ENCODE measurements at regions of chr19 and their contacts with region 1.

Region 1: GRCh38 chr19:2475702-2476450 is at the start of gene GADD45B:
- DNase-seq: peak; percentile 98 to 99 (median 99)
- H3K4me3 ChIP-seq: peak within 1 kb of the TSS; percentile 59 to 91 (median 73)
- H3K27ac ChIP-seq: peak within 1 kb of the TSS; percentile 79 to 96 (median 82)
- H3K4me1 ChIP-seq: peaks cover 10 to 17% of the 10 kb centered on the region in 2 donors
- H3K27me3 ChIP-seq: no peaks in the 10 kb centered on the region
- CTCF ChIP-seq: peak in 1 of 6 experiments; percentile 12
- POLR2A ChIP-seq: peak; percentile 100
- total RNA-seq, gene GADD45B: 14.1 to 119 (median 63.6) TPM

Region 2: DNA sequence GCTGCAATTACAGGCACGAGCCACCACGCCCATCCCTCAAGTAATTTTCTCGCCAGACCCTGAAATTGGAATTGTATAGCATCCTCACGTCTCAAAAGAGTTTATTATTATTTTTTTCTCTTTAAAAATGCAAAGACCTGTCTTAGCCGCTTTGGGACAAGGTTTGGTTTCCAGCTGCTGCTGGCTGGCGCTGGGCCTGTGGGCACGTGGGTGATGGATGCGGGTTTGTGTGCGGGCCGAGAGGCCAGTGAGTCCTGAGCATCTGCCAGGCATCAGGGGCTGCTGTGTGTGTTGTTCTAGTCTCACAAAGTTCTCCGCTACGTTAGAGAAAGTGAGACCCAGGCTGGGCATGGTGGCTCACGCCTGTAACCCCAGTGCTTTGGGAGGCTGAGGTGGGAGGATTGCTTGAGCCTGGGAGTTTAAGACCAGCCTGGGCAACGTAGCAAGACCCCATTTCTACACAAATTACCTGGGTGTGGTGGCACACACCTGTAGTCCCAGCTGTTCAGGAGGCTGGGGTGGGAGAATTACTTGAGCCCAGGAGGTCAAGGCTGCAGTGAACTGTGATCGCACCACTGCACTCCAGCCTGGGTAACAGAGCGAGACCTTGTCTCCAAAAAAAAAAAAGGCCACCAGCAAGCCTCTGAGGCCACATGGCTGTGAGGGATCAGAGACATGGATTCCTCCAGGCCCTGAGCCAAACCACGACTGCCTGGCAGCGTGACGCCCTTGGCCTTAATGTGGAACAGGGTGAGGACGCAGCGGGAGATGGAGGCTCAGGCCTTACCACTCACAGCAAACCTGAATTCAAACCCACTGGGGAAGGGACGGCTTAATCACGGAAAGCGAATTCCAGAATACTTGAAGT is 120.5 kb before region 1 on chr19:
- intact Hi-C with region 1: no loop called
- DNase-seq: peak; percentile 45 to 74 (median 67)
- H3K4me3 ChIP-seq: no peak overlapping the region
- H3K27ac ChIP-seq: peak overlapping the region in 1 of 5 donors; percentile 16
- H3K4me1 ChIP-seq: no peaks in the 10 kb centered on the region
- H3K27me3 ChIP-seq: no peaks in the 10 kb centered on the region
- CTCF ChIP-seq: no peak
- POLR2A ChIP-seq: no peak

Region 3: DNA sequence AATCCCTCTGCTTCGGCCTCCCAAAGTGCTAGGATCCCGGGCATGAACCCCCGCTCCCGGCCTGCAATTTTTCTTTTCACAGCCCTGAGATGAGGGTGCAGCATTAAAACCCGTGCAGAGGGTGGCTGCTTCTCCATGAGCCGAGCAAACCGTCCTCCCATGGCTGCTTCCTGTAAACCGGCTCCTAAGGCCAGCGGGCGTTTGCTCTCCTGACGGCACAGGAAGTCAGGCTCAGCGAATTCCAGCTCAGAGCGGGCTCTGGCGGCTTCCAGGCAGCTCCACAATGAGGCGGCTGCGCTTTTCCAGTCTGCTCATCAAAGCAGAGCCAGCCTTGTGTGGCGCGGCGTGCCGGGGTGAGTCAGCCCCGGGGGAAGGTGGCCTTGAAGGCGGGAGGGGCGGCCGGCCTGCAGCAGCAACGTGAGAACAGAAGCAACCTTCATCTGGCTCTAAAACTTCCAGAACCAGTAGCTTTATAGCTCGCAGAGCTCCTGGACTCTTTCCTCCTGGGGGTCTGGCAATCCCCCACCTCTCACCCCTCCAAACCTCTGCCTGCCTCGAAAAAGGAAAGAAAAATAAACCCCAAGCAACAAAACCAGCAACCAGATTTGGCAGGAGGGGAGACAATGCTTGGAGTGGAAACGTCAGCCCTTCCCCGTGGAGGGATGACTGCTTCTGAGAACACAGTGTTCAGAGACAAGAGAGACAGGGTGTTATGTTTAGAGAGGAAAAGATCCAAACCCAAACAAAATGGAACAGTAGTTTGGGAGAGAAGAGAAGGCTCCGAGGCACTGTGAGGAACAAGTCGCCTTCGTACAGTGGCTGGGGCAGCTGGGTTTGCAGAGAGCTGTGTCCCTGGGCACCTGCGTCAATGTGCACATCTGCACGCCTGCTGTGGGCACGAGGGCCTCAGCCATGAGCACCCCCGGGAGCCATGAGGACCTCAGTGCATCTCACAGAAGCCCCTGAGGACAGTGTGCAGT is 67.9 kb after region 1 on chr19:
- intact Hi-C with region 1: loop called in 1 of 2 experiments (anchors 5 kb)
- DNase-seq: peak; percentile 93 to 99 (median 98)
- H3K4me3 ChIP-seq: no peak overlapping the region
- H3K27ac ChIP-seq: peak overlapping the region; percentile 88 to 98 (median 97)
- H3K4me1 ChIP-seq: peaks cover 40 to 69% of the 10 kb centered on the region in 2 donors
- H3K27me3 ChIP-seq: no peaks in the 10 kb centered on the region
- CTCF ChIP-seq: peak in 3 of 6 experiments; percentile 8 to 34 (median 9)
- POLR2A ChIP-seq: peak; percentile 67 to 93

Region 4: GRCh38 chr19:2578901-2579677 is 103.2 kb after region 1 on chr19:
- intact Hi-C with region 1: loop called (anchors 2 kb)
- DNase-seq: peak; percentile 86 to 96 (median 92)
- H3K4me3 ChIP-seq: peak overlapping the region in 2 of 4 donors; percentile 4 to 58
- H3K27ac ChIP-seq: peak overlapping the region; percentile 55 to 95 (median 79)
- H3K4me1 ChIP-seq: peaks cover 16 to 24% of the 10 kb centered on the region in 2 donors
- H3K27me3 ChIP-seq: no peaks in the 10 kb centered on the region
- CTCF ChIP-seq: peak; percentile 85 to 98 (median 96)
- POLR2A ChIP-seq: peak in 1 of 2 donors; percentile 61

Region 5: GRCh38 chr19:2610637-2611482 is 135.0 kb after region 1 on chr19:
- intact Hi-C with region 1: loop called (anchors 5 to 10 kb)
- DNase-seq: peak; percentile 89 to 97 (median 95)
- H3K4me3 ChIP-seq: peak overlapping the region in 2 of 4 donors; percentile 35 to 53
- H3K27ac ChIP-seq: peak overlapping the region in 3 of 5 donors; percentile 58 to 85 (median 71)
- H3K4me1 ChIP-seq: peaks cover 0 to 4% of the 10 kb centered on the region in 2 donors
- H3K27me3 ChIP-seq: no peaks in the 10 kb centered on the region
- CTCF ChIP-seq: peak; percentile 87 to 98 (median 97)
- POLR2A ChIP-seq: peak in 1 of 2 donors; percentile 50